ENCODE measurements at regions of chr7 and their contacts with region 1.

Region 1: DNA sequence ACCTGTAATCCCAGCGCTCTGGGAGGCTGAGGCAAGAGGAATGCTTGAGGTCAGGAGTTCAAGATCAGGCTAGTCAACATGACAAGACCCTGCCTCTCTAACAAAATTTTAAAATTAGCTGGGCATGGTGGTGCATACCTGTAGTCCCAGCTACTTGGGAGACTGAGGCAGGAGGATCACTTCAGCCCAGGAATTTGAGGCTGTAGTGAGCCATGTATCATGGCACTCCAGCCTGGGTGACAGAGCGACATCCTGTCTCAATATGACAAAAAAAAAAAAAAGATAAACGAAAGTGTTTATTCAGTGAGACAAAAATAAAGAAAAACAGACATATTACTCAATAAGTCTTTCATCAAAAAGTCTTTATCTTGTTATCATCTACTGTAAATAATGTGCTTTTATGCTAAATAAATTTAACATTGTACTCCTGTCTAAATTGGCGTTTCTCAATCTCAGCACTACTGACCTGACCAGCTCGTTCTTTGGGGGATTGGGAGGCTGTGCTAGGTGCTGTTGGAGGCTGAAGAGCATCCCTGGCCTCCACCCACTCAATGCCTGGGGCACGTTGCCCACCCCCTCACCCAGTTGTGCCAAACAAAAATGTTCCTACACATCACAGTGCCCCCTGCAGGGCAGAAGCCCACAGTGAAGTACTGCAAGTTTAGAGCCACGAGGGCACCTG is 57.7 kb downstream of the NCAPG2 start:
- DNase-seq: peak in 1 of 2 experiments; percentile 38
- H3K4me3 ChIP-seq: no peak overlapping the region
- H3K4me3 Mint-ChIP-seq: no peak overlapping the region
- H3K27ac Mint-ChIP-seq: peak overlapping the region; percentile 59
- H3K4me1 ChIP-seq: peaks cover 39% of the 10 kb centered on the region
- H3K4me1 Mint-ChIP-seq: peaks cover 26% of the 10 kb centered on the region
- H3K27me3 ChIP-seq: no peaks in the 10 kb centered on the region
- H3K27me3 Mint-ChIP-seq: no peaks in the 10 kb centered on the region
- CTCF ChIP-seq: peak; percentile 17 to 57

Region 2: DNA sequence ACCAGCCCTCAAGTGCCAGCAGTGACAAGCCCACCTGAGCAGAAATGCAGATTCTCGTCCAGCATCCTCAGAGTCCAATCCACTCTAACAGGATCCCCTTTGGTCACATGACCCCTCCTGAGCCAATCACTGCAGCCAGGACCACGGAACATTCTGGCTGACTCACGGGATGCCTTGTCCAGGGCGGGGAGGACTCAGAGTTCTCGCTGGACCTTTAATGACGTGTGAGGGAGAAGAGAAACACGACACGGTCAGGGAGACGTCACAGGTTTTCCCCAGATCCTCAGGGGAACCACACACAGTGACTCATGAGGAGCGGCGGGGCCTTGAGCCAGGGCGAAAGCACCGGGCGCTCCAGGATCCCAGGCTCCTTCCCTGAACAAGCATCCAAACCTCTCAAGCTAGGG is 215.0 kb before region 1 on chr7:
- CTCF ChIA-PET with region 1: no interaction called
- POLR2A ChIA-PET with region 1: no interaction called
- intact Hi-C with region 1: loop called (anchors 2 kb)
- DNase-seq: peak; percentile 65 to 80
- H3K4me3 ChIP-seq: peak overlapping the region; percentile 22
- H3K4me3 Mint-ChIP-seq: peak overlapping the region; percentile 75
- H3K27ac Mint-ChIP-seq: peak overlapping the region; percentile 94
- H3K4me1 ChIP-seq: peaks cover 12% of the 10 kb centered on the region; the same call in 1 of the 2 replicates
- H3K4me1 Mint-ChIP-seq: peaks cover 7% of the 10 kb centered on the region
- H3K27me3 ChIP-seq: no peaks in the 10 kb centered on the region
- H3K27me3 Mint-ChIP-seq: no peaks in the 10 kb centered on the region
- CTCF ChIP-seq: no peak

Region 3: GRCh38 chr7:158495786-158496185 is 151.1 kb before region 1 on chr7:
- CTCF ChIA-PET with region 1: no interaction called
- POLR2A ChIA-PET with region 1: no interaction called
- intact Hi-C with region 1: loop called (anchors 2 kb)
- DNase-seq: peak in 1 of 2 experiments; percentile 34
- H3K4me3 ChIP-seq: no peak overlapping the region
- H3K4me3 Mint-ChIP-seq: no peak overlapping the region
- H3K27ac Mint-ChIP-seq: no peak overlapping the region
- H3K4me1 ChIP-seq: peaks cover 6% of the 10 kb centered on the region; the same call in 1 of the 2 replicates
- H3K4me1 Mint-ChIP-seq: peaks cover 6% of the 10 kb centered on the region
- H3K27me3 ChIP-seq: no peaks in the 10 kb centered on the region
- H3K27me3 Mint-ChIP-seq: no peaks in the 10 kb centered on the region
- CTCF ChIP-seq: peak in 1 of 2 experiments; percentile 16

Region 4: GRCh38 chr7:158549616-158550393 is 97.1 kb before region 1 on chr7:
- CTCF ChIA-PET with region 1: no interaction called
- POLR2A ChIA-PET with region 1: no interaction called
- intact Hi-C with region 1: no loop called
- DNase-seq: no peak
- H3K4me3 ChIP-seq: no peak overlapping the region
- H3K4me3 Mint-ChIP-seq: no peak overlapping the region
- H3K27ac Mint-ChIP-seq: no peak overlapping the region
- H3K4me1 ChIP-seq: no peaks in the 10 kb centered on the region
- H3K4me1 Mint-ChIP-seq: no peaks in the 10 kb centered on the region
- H3K27me3 ChIP-seq: no peaks in the 10 kb centered on the region
- H3K27me3 Mint-ChIP-seq: no peaks in the 10 kb centered on the region
- CTCF ChIP-seq: no peak